ENCODE measurements at regions of chr9 and their contacts with region 1.

Region 1: DNA sequence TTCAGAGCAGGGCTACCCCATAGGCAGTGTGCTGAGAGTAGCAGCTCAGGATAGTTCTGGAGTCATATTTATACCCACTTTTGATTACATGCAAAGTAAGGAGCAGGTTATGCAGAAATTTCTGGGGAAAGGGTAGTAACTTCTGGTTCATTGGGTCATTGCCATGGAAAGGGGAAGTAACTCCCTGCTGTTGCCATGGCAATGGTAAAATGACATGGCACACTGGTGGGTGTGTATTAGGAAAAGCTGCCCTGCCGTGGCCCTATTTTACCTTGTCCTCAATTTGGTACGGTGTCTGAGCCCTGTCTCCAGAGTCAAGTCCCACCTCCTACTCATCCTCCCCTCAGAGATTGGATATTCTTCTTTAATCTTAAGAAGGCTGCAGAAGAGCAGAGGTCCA is 526.7 kb upstream of the TYRP1 start:
- DNase-seq: no peak
- H3K4me3 ChIP-seq: no peak overlapping the region
- H3K27ac ChIP-seq: no peak overlapping the region
- H3K4me1 ChIP-seq: no peaks in the 10 kb centered on the region
- H3K27me3 ChIP-seq: no peaks in the 10 kb centered on the region
- CTCF ChIP-seq: no peak

Region 2: DNA sequence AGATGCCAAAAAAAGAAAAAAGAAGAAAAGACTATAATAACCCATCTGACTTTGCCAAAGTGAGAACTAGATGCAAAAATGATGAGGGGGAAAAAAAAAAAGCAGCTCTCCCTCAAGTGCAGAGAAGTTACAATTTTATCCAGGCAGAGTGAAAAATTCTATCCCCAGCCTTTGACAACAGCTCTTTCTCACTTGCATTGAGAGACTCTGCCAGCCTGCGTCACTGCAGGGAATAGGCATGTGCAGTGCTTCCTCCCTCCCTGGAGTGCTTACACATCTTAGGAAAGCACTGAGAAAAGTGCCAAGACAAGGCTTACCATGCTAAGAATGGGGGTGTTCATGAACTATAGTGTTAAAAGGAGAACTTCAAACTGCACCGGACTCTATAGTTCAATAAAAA is 108.1 kb after region 1 on chr9:
- CTCF ChIA-PET with region 1: no interaction called
- dilution Hi-C with region 1: loop called (anchors 5 kb)
- in situ Hi-C with region 1: no loop called
- intact Hi-C with region 1: no loop called
- DNase-seq: no peak
- H3K4me3 ChIP-seq: no peak overlapping the region
- H3K27ac ChIP-seq: no peak overlapping the region
- H3K4me1 ChIP-seq: no peaks in the 10 kb centered on the region
- H3K27me3 ChIP-seq: no peaks in the 10 kb centered on the region
- CTCF ChIP-seq: no peak

Region 3: DNA sequence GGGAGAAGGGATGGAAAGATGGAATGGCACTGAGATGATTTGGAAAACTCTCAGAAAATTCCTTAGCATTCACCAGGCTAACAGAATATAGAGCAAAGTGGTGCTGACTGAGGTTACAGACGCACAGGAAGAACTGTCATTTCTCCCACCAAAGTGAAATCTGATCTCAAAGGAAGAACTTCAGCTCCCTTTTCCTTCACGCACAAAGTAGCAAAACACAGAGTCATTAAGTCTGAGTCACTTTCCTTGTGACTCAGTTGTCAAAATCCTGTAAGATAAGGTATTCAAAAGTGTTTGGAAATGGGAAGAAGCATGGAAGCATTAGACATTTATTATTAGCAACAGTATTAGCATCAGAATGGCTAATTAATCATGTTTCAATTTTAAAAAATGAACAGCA is 1101.2 kb after region 1 on chr9:
- CTCF ChIA-PET with region 1: no interaction called
- dilution Hi-C with region 1: no loop called
- in situ Hi-C with region 1: no loop called
- intact Hi-C with region 1: no loop called
- DNase-seq: peak; percentile 67
- H3K4me3 ChIP-seq: no peak overlapping the region
- H3K27ac ChIP-seq: no peak overlapping the region
- H3K4me1 ChIP-seq: peaks cover 5% of the 10 kb centered on the region
- H3K27me3 ChIP-seq: no peaks in the 10 kb centered on the region
- CTCF ChIP-seq: no peak

Measured in mammary epithelial cell (primary cell).